ENCODE measurements at regions of chr1 and their contacts with region 1.

Region 1: GRCh38 chr1:33140153-33141149 is 41.4 kb downstream of the TRIM62 start:
- DNase-seq: no peak
- H3K4me3 ChIP-seq: no peak overlapping the region
- H3K27ac ChIP-seq: no peak overlapping the region
- H3K4me1 ChIP-seq: no peaks in the 10 kb centered on the region
- H3K27me3 ChIP-seq: no peaks in the 10 kb centered on the region
- CTCF ChIP-seq: no peak

Region 2: DNA sequence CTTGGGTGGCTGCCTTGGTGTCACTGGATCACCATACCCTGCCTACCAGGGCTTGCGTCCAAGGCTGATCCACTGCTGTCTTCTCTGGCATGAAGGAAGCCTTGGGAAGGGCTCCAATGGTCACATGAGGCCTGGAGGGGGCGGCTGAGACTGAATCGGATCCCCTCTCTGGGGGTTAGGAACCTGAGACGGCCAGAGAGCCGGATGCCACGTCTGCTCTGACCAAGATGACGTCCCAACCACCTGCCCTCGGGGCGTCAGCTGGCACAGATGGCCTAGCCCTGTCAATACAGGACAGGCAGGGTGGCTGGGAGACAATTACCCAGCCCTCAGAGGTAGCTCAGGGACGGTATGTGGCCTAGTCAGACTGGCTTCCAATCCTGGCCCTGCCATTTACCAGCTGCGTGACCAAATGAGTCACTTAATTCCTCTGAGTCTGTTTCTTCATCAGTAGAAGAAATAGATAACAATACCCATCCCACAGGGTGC is 36.0 kb after region 1 on chr1:
- dilution Hi-C with region 1: loop called (anchors 5 kb)
- DNase-seq: peak; percentile 46
- H3K4me3 ChIP-seq: no peak overlapping the region
- H3K27ac ChIP-seq: no peak overlapping the region
- H3K4me1 ChIP-seq: peaks cover 10% of the 10 kb centered on the region
- H3K27me3 ChIP-seq: no peaks in the 10 kb centered on the region
- CTCF ChIP-seq: no peak

Measured in keratinocyte (primary cell).